ENCODE measurements at regions of chr15 and their contacts with region 1.

Region 1: GRCh38 chr15:100721770-100722550 is 119.6 kb downstream of the ASB7 start:
- DNase-seq: peak; percentile 99
- ATAC-seq: peak; percentile 69
- H3K4me3 ChIP-seq: peak overlapping the region; percentile 38; the same call in 1 of the 2 replicates
- H3K27ac ChIP-seq: peak overlapping the region; percentile 100
- H3K4me1 ChIP-seq: peaks cover 51% of the 10 kb centered on the region
- H3K27me3 ChIP-seq: no peaks in the 10 kb centered on the region
- CTCF ChIP-seq: no peak

Region 2: GRCh38 chr15:100671858-100672543 is 50.0 kb before region 1 on chr15:
- CTCF ChIA-PET with region 1: no interaction called
- POLR2A ChIA-PET with region 1: no interaction called
- intact Hi-C with region 1: loop called (anchors 1 kb)
- DNase-seq: peak; percentile 47
- ATAC-seq: peak; percentile 84
- H3K4me3 ChIP-seq: no peak overlapping the region
- H3K27ac ChIP-seq: peak overlapping the region; percentile 60
- H3K4me1 ChIP-seq: peaks cover 23% of the 10 kb centered on the region
- H3K27me3 ChIP-seq: no peaks in the 10 kb centered on the region
- CTCF ChIP-seq: peak; percentile 66

Region 3: GRCh38 chr15:100759698-100760356 is 37.9 kb after region 1 on chr15:
- CTCF ChIA-PET with region 1: interaction called, 3 read pairs
- POLR2A ChIA-PET with region 1: interaction called, 6 read pairs
- intact Hi-C with region 1: loop called (anchors 5 kb)
- DNase-seq: peak; percentile 73
- ATAC-seq: peak; percentile 91
- H3K4me3 ChIP-seq: peak overlapping the region; percentile 42
- H3K27ac ChIP-seq: peak overlapping the region; percentile 70
- H3K4me1 ChIP-seq: peaks cover 23% of the 10 kb centered on the region
- H3K27me3 ChIP-seq: no peaks in the 10 kb centered on the region
- CTCF ChIP-seq: no peak

Region 4: DNA sequence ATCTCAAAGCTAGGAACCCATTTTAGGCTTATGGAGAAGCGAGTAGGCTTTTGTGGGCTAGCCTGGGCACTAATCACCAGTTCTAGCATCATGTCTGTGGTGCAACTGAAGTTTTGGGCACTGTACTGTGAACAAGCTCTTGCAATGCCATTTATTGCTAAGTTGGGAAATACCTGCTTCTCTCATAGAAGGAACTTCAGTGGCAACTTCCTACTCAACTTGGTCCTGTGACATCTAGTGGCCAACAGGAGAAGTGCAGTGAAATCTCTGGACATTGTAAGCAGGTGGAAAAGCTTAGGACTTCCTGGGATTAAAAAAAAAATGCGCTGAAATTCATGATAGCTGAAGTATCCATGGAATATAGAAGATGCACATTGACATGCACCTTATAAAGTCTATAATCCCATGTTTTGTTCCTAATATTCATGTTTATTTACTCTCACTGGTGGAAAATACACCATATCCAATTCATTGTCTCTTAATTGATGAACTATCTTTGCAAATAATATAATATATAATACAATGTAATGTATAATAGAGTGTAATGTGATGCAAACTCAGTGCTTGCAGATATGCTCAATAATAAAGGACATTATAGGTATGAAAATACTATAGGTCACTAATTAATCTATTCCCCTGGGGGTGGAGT is 151.2 kb after region 1 on chr15:
- CTCF ChIA-PET with region 1: interaction called, 9 read pairs
- POLR2A ChIA-PET with region 1: interaction called, 8 read pairs
- intact Hi-C with region 1: loop called (anchors 2 kb)
- DNase-seq: peak; percentile 96
- ATAC-seq: peak; percentile 69
- H3K4me3 ChIP-seq: no peak overlapping the region
- H3K27ac ChIP-seq: peak overlapping the region; percentile 54
- H3K4me1 ChIP-seq: peaks cover 18% of the 10 kb centered on the region
- H3K27me3 ChIP-seq: no peaks in the 10 kb centered on the region
- CTCF ChIP-seq: peak; percentile 81